ENCODE measurements at regions of chr5 and their contacts with region 1.

Region 1: DNA sequence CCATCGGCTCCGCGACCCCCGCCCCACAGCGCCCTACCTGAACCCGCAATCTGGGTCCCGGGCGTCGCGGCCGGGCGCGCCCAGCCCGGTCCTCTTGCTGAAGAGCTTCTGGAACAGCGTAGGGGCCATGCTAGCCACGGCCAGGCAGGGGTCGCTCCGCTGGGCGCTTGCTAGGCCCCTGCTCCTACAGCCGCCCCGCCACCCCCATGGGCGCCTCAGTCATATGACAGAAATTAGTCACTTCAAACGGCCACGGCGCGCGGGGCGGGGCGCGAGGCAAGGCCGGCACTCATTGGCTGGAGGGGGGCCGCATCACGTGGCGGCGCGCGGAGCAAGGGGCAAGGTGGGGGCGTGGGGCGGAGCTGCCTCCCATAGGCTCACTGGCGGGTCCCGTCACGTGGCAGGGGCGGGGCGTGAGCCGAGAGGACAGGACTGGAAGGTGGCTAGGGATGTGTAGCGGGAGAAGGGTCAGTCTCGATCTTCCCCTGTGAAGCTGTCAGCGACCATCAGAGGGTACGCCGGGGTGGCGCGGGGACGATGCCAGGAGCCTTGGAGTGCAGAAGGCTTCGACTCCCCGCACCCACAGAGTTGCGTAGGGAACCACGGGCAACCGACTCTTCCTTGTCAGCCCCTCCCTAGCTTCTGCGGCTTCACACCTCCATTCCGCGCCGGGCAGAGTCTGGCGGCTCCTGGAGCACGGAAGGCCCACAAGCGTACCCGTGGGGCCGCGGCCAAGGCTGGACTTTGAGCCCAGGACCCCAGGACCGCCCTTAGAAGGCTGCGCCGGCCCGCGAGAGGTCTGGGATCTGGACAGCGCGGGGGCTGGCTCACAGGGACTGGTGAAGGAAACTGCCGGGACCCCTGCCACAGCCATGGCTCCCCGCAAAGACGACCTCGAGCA is at the start of gene FNIP1:
- DNase-seq: peak; percentile 97 to 99
- ATAC-seq: peak; percentile 91 to 99 (median 95)
- H3K4me3 ChIP-seq: peak within 1 kb of the TSS; percentile 72
- H3K4me3 Mint-ChIP-seq: peak within 1 kb of the TSS; percentile 93
- H3K27ac ChIP-seq: peak within 1 kb of the TSS; percentile 91
- H3K27ac Mint-ChIP-seq: peak within 1 kb of the TSS; percentile 86 to 94
- H3K4me1 ChIP-seq: peaks cover 6% of the 10 kb centered on the region
- H3K4me1 Mint-ChIP-seq: peaks cover 24 to 29% of the 10 kb centered on the region in 2 donors
- H3K27me3 ChIP-seq: no peaks in the 10 kb centered on the region
- H3K27me3 Mint-ChIP-seq: no peaks in the 10 kb centered on the region
- CTCF ChIP-seq: no peak
- total RNA-seq, gene FNIP1: 49.6 to 54.6 (median 50.8) TPM

Region 2: GRCh38 chr5:131589510-131590348 is 207.3 kb before region 1 on chr5:
- intact Hi-C with region 1: loop called (anchors 5 kb)
- DNase-seq: peak in 1 of 2 donors; percentile 81
- ATAC-seq: peak; percentile 65 to 78 (median 75)
- H3K4me3 ChIP-seq: no peak overlapping the region
- H3K4me3 Mint-ChIP-seq: no peak overlapping the region
- H3K27ac ChIP-seq: no peak overlapping the region
- H3K27ac Mint-ChIP-seq: no peak overlapping the region
- H3K4me1 ChIP-seq: peaks cover 14% of the 10 kb centered on the region
- H3K4me1 Mint-ChIP-seq: peaks cover 24 to 26% of the 10 kb centered on the region in 2 donors
- H3K27me3 ChIP-seq: no peaks in the 10 kb centered on the region
- H3K27me3 Mint-ChIP-seq: no peaks in the 10 kb centered on the region
- CTCF ChIP-seq: peak; percentile 92

Region 3: DNA sequence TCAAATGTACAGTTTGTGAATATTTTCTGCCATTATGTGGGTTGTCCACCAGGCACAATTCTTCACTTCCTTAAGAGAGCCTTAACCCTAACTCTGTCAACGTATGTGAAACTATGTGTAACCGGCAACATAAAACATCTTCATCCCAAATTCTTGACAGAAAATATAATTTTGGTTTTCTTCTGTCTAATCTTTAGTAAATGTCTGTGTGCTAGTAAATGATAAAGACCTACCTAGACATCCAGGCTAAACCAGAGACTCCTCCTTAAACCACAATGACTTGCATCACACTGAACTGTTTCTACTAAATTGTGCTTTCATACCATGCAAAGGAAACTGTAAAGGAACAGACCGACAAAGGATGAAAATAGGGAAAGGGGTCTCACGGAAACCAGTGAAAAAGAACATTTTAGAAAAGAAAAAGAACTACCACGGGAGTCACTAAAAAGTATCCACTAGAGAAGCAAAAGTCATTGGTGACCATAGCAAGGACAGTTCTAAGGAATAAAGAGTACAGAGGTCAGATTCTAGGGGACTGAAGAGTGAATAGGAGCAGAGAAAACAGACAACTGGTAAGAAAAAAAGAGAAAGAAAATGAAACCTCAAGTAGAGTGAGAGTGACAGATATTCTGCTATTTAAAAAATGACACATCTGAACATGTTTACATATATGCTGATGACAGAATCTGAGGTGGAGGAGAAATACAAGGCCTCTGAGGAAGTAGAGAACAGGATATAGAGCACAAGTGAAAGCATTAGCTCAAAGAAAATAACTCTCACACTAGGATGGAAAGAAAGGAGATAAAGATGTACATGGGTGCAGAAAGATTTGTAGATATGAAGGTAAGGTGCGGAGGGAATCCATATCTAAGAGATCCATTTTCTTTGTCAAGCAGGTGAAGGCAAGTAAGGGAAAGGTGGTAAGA is 49.6 kb before region 1 on chr5:
- intact Hi-C with region 1: loop called (anchors 5 kb)
- DNase-seq: peak in 1 of 2 donors; percentile 39
- ATAC-seq: peak; percentile 72 to 75 (median 73)
- H3K4me3 ChIP-seq: no peak overlapping the region
- H3K4me3 Mint-ChIP-seq: peak overlapping the region; percentile 63
- H3K27ac ChIP-seq: peak overlapping the region; percentile 53
- H3K27ac Mint-ChIP-seq: peak overlapping the region; percentile 83 to 85
- H3K4me1 ChIP-seq: peaks cover 3% of the 10 kb centered on the region
- H3K4me1 Mint-ChIP-seq: peaks cover 30 to 41% of the 10 kb centered on the region in 2 donors
- H3K27me3 ChIP-seq: no peaks in the 10 kb centered on the region
- H3K27me3 Mint-ChIP-seq: no peaks in the 10 kb centered on the region
- CTCF ChIP-seq: no peak

Region 4: DNA sequence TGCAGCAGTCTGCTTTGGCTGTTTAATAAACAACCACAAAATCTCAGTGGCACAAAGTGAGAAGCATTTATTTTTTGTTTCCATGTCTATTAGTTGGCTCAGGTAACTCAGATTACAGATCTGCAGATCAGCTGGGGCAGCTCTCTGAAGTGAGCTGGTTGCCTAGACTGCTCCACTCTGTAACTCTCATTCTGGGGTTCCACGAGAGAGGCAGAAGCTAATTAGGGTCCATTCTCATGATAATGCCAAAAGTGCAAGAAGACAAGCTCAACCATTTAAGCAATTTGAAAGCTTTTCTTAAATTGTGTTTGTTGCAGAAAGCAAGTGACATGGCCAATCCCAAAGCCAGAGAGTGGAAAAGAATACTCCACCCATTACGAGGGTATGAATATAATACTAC is 135.2 kb after region 1 on chr5:
- intact Hi-C with region 1: no loop called
- DNase-seq: no peak
- ATAC-seq: no peak
- H3K4me3 ChIP-seq: no peak overlapping the region
- H3K4me3 Mint-ChIP-seq: no peak overlapping the region
- H3K27ac ChIP-seq: no peak overlapping the region
- H3K27ac Mint-ChIP-seq: no peak overlapping the region
- H3K4me1 ChIP-seq: no peaks in the 10 kb centered on the region
- H3K4me1 Mint-ChIP-seq: no peaks in the 10 kb centered on the region
- H3K27me3 ChIP-seq: peaks cover 7% of the 10 kb centered on the region
- H3K27me3 Mint-ChIP-seq: peaks cover 25 to 30% of the 10 kb centered on the region in 2 donors
- CTCF ChIP-seq: no peak

Region 5: DNA sequence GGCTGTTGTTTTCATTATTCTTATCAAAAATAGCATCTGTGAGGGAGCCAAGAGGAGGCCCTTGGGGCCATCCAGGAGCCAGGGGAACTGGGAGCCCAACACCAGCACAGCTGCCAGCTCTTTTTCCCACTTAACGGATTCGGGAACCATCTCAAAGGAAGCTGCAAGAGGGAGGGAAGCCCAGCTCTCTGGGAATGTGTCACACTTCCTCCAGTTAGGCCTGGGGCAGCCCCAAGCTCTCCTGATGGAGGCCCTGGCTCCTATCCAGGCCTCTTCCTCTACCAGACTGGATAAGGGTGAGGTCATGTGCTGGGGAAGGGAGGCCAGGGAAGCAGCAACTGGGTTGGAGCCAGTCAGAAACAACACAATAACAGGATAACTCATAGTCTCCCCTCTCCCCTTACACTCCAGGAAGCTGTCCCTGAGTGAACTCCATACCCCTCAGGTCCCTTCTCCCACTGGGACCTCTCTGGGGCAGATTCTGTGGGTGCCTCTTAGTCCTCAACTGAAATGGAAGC is 289.3 kb after region 1 on chr5:
- intact Hi-C with region 1: no loop called
- DNase-seq: no peak
- ATAC-seq: no peak
- H3K4me3 ChIP-seq: no peak overlapping the region
- H3K4me3 Mint-ChIP-seq: no peak overlapping the region
- H3K27ac ChIP-seq: no peak overlapping the region
- H3K27ac Mint-ChIP-seq: no peak overlapping the region
- H3K4me1 ChIP-seq: peaks cover 9% of the 10 kb centered on the region
- H3K4me1 Mint-ChIP-seq: peaks cover 11 to 22% of the 10 kb centered on the region in 2 donors
- H3K27me3 ChIP-seq: no peaks in the 10 kb centered on the region
- H3K27me3 Mint-ChIP-seq: no peaks in the 10 kb centered on the region
- CTCF ChIP-seq: no peak

Measured in natural killer cell (primary cell).